Lower lobe of right lung (tissue), 2 donors: ENCODE measurements at regions of chr9 and their contacts with region 1.

Region 1: GRCh38 chr9:70352802-70353201 is 61.7 kb downstream of the KLF9 start:
- DNase-seq: no peak
- ATAC-seq: no peak
- H3K4me3 ChIP-seq: no peak overlapping the region
- H3K27ac ChIP-seq: no peak overlapping the region
- H3K4me1 ChIP-seq: no peaks in the 10 kb centered on the region
- H3K27me3 ChIP-seq: no peaks in the 10 kb centered on the region
- CTCF ChIP-seq: peak; percentile 60

Region 2: GRCh38 chr9:70406434-70406862 is 53.6 kb after region 1 on chr9:
- intact Hi-C with region 1: loop called (anchors 10 kb)
- DNase-seq: no peak
- ATAC-seq: peak; percentile 26 to 56
- H3K4me3 ChIP-seq: peak overlapping the region; percentile 75
- H3K27ac ChIP-seq: peak overlapping the region; percentile 64
- H3K4me1 ChIP-seq: peaks cover 94% of the 10 kb centered on the region
- H3K27me3 ChIP-seq: no peaks in the 10 kb centered on the region
- CTCF ChIP-seq: no peak

Region 3: GRCh38 chr9:70484210-70485130 is 131.7 kb after region 1 on chr9:
- intact Hi-C with region 1: loop called (anchors 10 kb)
- DNase-seq: no peak
- ATAC-seq: peak; percentile 75 to 80
- H3K4me3 ChIP-seq: no peak overlapping the region
- H3K27ac ChIP-seq: peak overlapping the region; percentile 51
- H3K4me1 ChIP-seq: peaks cover 73% of the 10 kb centered on the region
- H3K27me3 ChIP-seq: no peaks in the 10 kb centered on the region
- CTCF ChIP-seq: peak; percentile 83